Adrenal gland (tissue), 19 donors: ENCODE measurements at regions of chr6 and their contacts with region 1.

Region 1: DNA sequence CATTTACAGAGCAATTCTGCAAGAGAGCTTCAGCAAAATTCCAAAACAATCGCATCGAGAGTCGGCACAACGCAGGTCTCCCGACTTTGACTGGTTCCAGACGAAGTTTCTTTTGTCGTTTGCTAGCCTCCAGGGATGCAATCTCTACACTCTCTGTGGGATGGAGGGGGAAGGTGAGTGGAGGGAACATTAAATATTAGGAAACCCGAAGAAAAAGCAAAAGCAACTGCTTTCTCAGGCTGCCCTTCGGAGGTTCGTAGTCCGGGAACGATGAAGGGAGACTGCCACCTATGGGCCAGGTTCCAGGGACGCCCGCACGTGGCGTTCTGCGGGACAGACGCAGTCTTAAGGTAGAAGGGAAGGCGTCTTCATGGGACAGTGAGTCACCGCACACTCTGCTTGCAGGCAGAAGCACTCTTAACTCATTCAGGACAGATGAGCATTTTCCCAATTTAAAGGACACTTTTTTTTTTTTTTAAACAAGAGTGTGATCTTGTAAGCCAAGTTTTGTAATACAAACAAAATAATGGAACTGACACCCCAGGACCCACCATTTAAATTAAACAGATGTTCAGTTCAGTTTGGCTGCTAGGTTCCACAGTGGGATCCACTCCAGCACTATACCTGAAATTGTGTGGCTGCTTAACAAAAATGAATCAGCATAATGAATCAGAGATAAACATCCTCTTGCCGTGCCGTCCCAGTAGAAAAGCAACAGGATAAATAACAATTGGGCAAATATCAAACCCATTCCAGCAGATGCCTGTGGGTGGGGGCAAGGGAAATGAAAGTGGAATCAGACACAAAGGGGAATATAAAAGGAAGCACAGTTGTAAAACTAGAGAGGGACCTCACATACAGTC is 65.8 kb upstream of the ARMC2 start:
- DNase-seq: peak; percentile 80 to 93 (median 84)
- H3K4me3 ChIP-seq: peak overlapping the region in 3 of 4 donors; percentile 8 to 60 (median 17)
- H3K27ac ChIP-seq: peak overlapping the region in 2 of 5 donors; percentile 9 to 40
- H3K4me1 ChIP-seq: peaks cover 5 to 19% of the 10 kb centered on the region in 2 donors
- H3K27me3 ChIP-seq: peaks cover 7% of the 10 kb centered on the region
- CTCF ChIP-seq: peak; percentile 42 to 79 (median 72)
- POLR2A ChIP-seq: no peak

Region 2: GRCh38 chr6:108565893-108566292 is 216.5 kb before region 1 on chr6:
- intact Hi-C with region 1: loop called in 1 of 2 experiments (anchors 5 kb)
- DNase-seq: peak in 6 of 7 donors; percentile 65 to 86 (median 80)
- H3K4me3 ChIP-seq: no peak overlapping the region
- H3K27ac ChIP-seq: peak overlapping the region; percentile 2 to 99 (median 59)
- H3K4me1 ChIP-seq: peaks cover 14 to 62% of the 10 kb centered on the region in 2 donors
- H3K27me3 ChIP-seq: no peaks in the 10 kb centered on the region
- CTCF ChIP-seq: peak in 4 of 6 experiments; percentile 30 to 51 (median 45)
- POLR2A ChIP-seq: no peak

Region 3: GRCh38 chr6:109143191-109143590 is 360.8 kb after region 1 on chr6:
- intact Hi-C with region 1: no loop called
- DNase-seq: no peak
- H3K4me3 ChIP-seq: no peak overlapping the region
- H3K27ac ChIP-seq: no peak overlapping the region
- H3K4me1 ChIP-seq: peaks cover 0 to 7% of the 10 kb centered on the region in 2 donors
- H3K27me3 ChIP-seq: no peaks in the 10 kb centered on the region
- CTCF ChIP-seq: no peak
- POLR2A ChIP-seq: no peak